ENCODE measurements at regions of chr13 and their contacts with region 1.

Region 1: GRCh38 chr13:98397221-98397620 is 179.7 kb downstream of the STK24 start:
- DNase-seq: no peak

Region 2: GRCh38 chr13:98022210-98022609 is 375.0 kb before region 1 on chr13:
- intact Hi-C with region 1: no loop called
- DNase-seq: peak in 4 of 10 donors; percentile 16 to 53 (median 38)

Region 3: GRCh38 chr13:98142380-98143156 is 254.7 kb before region 1 on chr13 and contains the start of gene FARP1:
- intact Hi-C with region 1: loop called (anchors 2 kb)
- DNase-seq: peak in 9 of 10 donors; percentile 32 to 94 (median 52)

Region 4: GRCh38 chr13:98576200-98576945 is 179.2 kb after region 1 on chr13:
- intact Hi-C with region 1: no loop called
- DNase-seq: peak in 7 of 10 donors; percentile 21 to 87 (median 46)

Measured in posterior cingulate gyrus (tissue), 11 donors.